CD4-positive, alpha-beta memory T cell (primary cell): ENCODE measurements at regions of chr2 and their contacts with region 1.

Region 1: GRCh38 chr2:101387151-101387807 is at the start of gene CREG2:
- DNase-seq: peak in 4 of 5 donors; percentile 56 to 63 (median 62)
- H3K4me3 ChIP-seq: peak within 1 kb of the TSS in 1 of 2 donors; percentile 38
- H3K4me3 Mint-ChIP-seq: peak within 1 kb of the TSS; percentile 75 to 89 (median 83)
- H3K27ac ChIP-seq: no peak within 1 kb of the TSS
- H3K27ac Mint-ChIP-seq: no peak within 1 kb of the TSS
- H3K4me1 ChIP-seq: peaks cover 15% of the 10 kb centered on the region
- H3K4me1 Mint-ChIP-seq: peaks cover 4 to 11% (median 8%) of the 10 kb centered on the region in 4 donors
- H3K27me3 ChIP-seq: peaks cover 17% of the 10 kb centered on the region
- H3K27me3 Mint-ChIP-seq: peaks cover 30 to 43% of the 10 kb centered on the region in 2 donors
- total RNA-seq, gene CREG2: not detected

Region 2: DNA sequence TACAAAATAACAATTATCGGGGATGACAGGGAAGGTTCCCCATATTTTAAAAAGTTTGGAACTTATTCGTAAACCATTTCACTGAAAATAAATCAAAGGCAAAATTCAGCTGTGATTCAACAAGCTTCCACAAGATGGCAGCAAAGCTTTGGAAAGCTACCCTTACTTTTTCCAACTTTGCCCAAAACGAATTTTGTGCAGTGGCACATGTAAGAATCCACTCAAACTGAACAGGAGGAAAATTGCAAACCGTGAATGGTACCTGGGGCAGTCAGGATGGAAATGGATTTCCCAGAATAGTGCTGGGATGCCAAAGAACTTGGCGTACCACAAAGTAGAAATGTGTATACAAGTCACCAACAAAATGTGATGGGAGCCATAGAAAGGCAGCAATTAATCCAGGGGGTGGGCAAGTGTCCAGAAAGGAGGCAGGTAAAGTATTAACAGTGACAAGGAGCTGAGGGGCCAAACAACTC is 374.5 kb before region 1 on chr2:
- CTCF ChIA-PET with region 1: no interaction called
- POLR2A ChIA-PET with region 1: no interaction called
- intact Hi-C with region 1: loop called (anchors 1 kb)
- DNase-seq: peak in 4 of 5 donors; percentile 24 to 51 (median 37)
- H3K4me3 ChIP-seq: no peak overlapping the region
- H3K4me3 Mint-ChIP-seq: no peak overlapping the region
- H3K27ac ChIP-seq: no peak overlapping the region
- H3K27ac Mint-ChIP-seq: peak overlapping the region in 2 of 7 donors; percentile 30 to 55
- H3K4me1 ChIP-seq: no peaks in the 10 kb centered on the region
- H3K4me1 Mint-ChIP-seq: peaks cover 8 to 18% (median 12%) of the 10 kb centered on the region in 4 donors
- H3K27me3 ChIP-seq: no peaks in the 10 kb centered on the region
- H3K27me3 Mint-ChIP-seq: no peaks in the 10 kb centered on the region

Region 3: GRCh38 chr2:101223814-101224231 is 163.5 kb before region 1 on chr2:
- CTCF ChIA-PET with region 1: no interaction called
- POLR2A ChIA-PET with region 1: no interaction called
- intact Hi-C with region 1: no loop called
- DNase-seq: peak; percentile 60 to 72 (median 66)
- H3K4me3 ChIP-seq: no peak overlapping the region
- H3K4me3 Mint-ChIP-seq: peak overlapping the region; percentile 42 to 78 (median 58)
- H3K27ac ChIP-seq: no peak overlapping the region
- H3K27ac Mint-ChIP-seq: peak overlapping the region; percentile 43 to 91 (median 67)
- H3K4me1 ChIP-seq: peaks cover 14% of the 10 kb centered on the region
- H3K4me1 Mint-ChIP-seq: peaks cover 13 to 16% (median 13%) of the 10 kb centered on the region in 4 donors
- H3K27me3 ChIP-seq: no peaks in the 10 kb centered on the region
- H3K27me3 Mint-ChIP-seq: no peaks in the 10 kb centered on the region

Region 4: DNA sequence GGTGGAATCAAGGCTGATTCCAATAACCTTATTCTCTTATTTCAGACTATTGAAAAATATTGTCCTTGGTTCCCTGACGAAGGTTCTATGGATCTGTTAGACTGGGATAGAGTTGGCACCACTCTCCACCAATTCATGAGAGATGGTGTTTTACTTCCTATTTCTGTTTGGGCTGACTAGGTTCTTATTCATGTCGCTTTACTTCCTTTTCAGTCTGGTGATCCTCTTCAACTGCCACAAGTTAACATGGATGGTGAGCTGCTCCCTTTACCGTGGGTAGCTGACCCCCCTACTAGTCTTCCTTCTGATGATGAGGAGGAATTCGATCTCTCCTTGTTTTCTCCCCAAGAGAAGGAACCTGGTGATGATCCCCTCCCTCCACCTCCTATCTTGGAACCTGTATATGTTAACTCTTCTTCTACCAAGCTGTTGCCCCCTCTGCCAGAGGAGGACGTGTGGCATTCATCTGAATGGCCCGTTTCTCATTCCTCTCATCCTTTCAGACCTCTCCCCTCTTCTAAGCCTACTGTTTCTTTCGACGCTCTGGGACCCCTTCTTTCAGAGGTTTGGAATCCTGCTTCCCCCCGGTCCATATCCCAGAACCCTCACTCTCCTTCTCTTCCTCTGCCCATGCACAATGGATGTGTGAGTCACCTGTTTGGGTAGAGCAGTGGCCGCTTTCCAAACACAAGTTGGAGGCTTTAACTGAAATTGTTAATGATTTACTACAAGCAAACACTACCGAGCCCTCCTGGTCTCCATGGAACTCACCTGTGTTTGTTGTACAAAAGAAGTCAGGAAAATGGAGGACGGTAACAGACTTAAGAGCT is 148.1 kb before region 1 on chr2:
- CTCF ChIA-PET with region 1: interaction called, 5 read pairs
- POLR2A ChIA-PET with region 1: no interaction called
- intact Hi-C with region 1: loop called (anchors 1 kb)
- DNase-seq: no peak
- H3K4me3 ChIP-seq: no peak overlapping the region
- H3K4me3 Mint-ChIP-seq: no peak overlapping the region
- H3K27ac ChIP-seq: no peak overlapping the region
- H3K27ac Mint-ChIP-seq: no peak overlapping the region
- H3K4me1 ChIP-seq: no peaks in the 10 kb centered on the region
- H3K4me1 Mint-ChIP-seq: peaks cover 0 to 9% (median 3%) of the 10 kb centered on the region in 4 donors
- H3K27me3 ChIP-seq: no peaks in the 10 kb centered on the region
- H3K27me3 Mint-ChIP-seq: no peaks in the 10 kb centered on the region

Region 5: GRCh38 chr2:101341901-101342624 is 45.2 kb before region 1 on chr2:
- CTCF ChIA-PET with region 1: interaction called, 124 read pairs
- POLR2A ChIA-PET with region 1: interaction called, 17 read pairs
- intact Hi-C with region 1: loop called (anchors 1 kb)
- DNase-seq: peak; percentile 59 to 66 (median 62)
- H3K4me3 ChIP-seq: no peak overlapping the region
- H3K4me3 Mint-ChIP-seq: peak overlapping the region in 4 of 8 donors; percentile 21 to 58 (median 34)
- H3K27ac ChIP-seq: no peak overlapping the region
- H3K27ac Mint-ChIP-seq: peak overlapping the region in 5 of 7 donors; percentile 25 to 75 (median 65)
- H3K4me1 ChIP-seq: peaks cover 26% of the 10 kb centered on the region
- H3K4me1 Mint-ChIP-seq: peaks cover 21 to 33% (median 29%) of the 10 kb centered on the region in 4 donors
- H3K27me3 ChIP-seq: no peaks in the 10 kb centered on the region
- H3K27me3 Mint-ChIP-seq: no peaks in the 10 kb centered on the region

Region 6: DNA sequence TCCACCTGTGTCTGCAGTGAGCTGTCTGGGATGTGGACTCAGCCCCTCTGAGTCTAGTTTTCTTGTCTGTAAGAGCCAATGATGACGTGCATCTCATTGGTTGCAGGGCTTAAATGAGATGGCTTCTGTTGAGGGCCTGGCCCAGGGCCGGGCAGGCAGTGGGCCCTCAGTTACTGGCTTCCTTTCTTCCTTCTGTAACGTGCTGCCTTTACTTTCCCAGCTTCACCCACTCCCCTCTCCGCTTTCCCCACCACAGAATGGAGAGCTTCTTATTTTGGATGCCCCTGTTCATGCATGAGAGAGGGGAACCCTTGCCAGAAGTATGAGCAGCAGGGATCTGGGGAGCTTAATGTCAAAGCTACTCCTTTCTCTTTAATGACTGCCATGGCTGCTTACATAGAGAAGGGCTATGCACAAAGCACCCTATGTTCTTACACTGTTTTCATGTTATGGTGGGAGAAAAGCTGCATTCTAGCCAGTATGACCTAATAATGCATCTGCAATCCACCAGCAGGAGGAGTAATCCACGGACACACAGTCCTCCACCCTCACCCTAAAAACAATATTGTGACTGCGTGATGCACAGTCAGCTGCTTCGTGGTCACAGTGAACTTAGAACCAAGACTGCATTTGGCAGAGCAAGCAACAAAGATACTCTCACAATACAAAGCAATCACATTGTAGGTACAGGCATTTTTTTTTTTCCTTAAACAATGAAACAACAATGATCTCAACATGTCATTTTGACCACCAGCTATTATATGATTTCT is 37.2 kb before region 1 on chr2:
- CTCF ChIA-PET with region 1: interaction called, 124 read pairs
- POLR2A ChIA-PET with region 1: interaction called, 14 read pairs
- intact Hi-C with region 1: no loop called
- DNase-seq: peak in 2 of 5 donors; percentile 20 to 38
- H3K4me3 ChIP-seq: no peak overlapping the region
- H3K4me3 Mint-ChIP-seq: peak overlapping the region in 2 of 8 donors; percentile 3 to 29
- H3K27ac ChIP-seq: no peak overlapping the region
- H3K27ac Mint-ChIP-seq: peak overlapping the region in 3 of 7 donors; percentile 10 to 23 (median 15)
- H3K4me1 ChIP-seq: peaks cover 12% of the 10 kb centered on the region
- H3K4me1 Mint-ChIP-seq: peaks cover 7 to 9% (median 8%) of the 10 kb centered on the region in 4 donors
- H3K27me3 ChIP-seq: no peaks in the 10 kb centered on the region
- H3K27me3 Mint-ChIP-seq: no peaks in the 10 kb centered on the region